ENCODE measurements at regions of chr2 and their contacts with region 1.

Region 1: GRCh38 chr2:74715078-74715791 is 61.2 kb downstream of the SEMA4F start:
- DNase-seq: peak; percentile 87
- H3K4me3 ChIP-seq: peak overlapping the region; percentile 23 to 60 (median 54)
- H3K27ac ChIP-seq: peak overlapping the region; percentile 59 to 72 (median 65)
- H3K4me1 ChIP-seq: peaks cover 0 to 11% (median 8%) of the 10 kb centered on the region in 4 donors
- H3K27me3 ChIP-seq: no peaks in the 10 kb centered on the region
- CTCF ChIP-seq: peak; percentile 63 to 90 (median 84)
- EP300 ChIP-seq: no peak
- POLR2A ChIP-seq: no peak

Region 2: GRCh38 chr2:74725287-74725686 is 10.1 kb after region 1 on chr2:
- intact Hi-C with region 1: no loop called
- DNase-seq: no peak
- H3K4me3 ChIP-seq: no peak overlapping the region
- H3K27ac ChIP-seq: no peak overlapping the region
- H3K4me1 ChIP-seq: no peaks in the 10 kb centered on the region
- H3K27me3 ChIP-seq: peaks cover 0 to 4% (median 0%) of the 10 kb centered on the region in 3 donors
- CTCF ChIP-seq: no peak
- EP300 ChIP-seq: no peak
- POLR2A ChIP-seq: no peak

Region 3: GRCh38 chr2:74764429-74765272 is 49.4 kb after region 1 on chr2:
- intact Hi-C with region 1: no loop called
- DNase-seq: no peak
- H3K4me3 ChIP-seq: no peak overlapping the region
- H3K27ac ChIP-seq: no peak overlapping the region
- H3K4me1 ChIP-seq: peaks cover 0 to 19% (median 6%) of the 10 kb centered on the region in 4 donors
- H3K27me3 ChIP-seq: no peaks in the 10 kb centered on the region
- CTCF ChIP-seq: no peak
- EP300 ChIP-seq: no peak
- POLR2A ChIP-seq: no peak

Region 4: GRCh38 chr2:74876081-74876886 is 161.0 kb after region 1 on chr2:
- intact Hi-C with region 1: loop called (anchors 1 kb)
- DNase-seq: no peak
- H3K4me3 ChIP-seq: no peak overlapping the region
- H3K27ac ChIP-seq: peak overlapping the region in 3 of 4 donors; percentile 7 to 33 (median 32)
- H3K4me1 ChIP-seq: peaks cover 0 to 8% (median 2%) of the 10 kb centered on the region in 4 donors
- H3K27me3 ChIP-seq: no peaks in the 10 kb centered on the region
- CTCF ChIP-seq: peak in 3 of 4 experiments; percentile 47 to 69 (median 57)
- EP300 ChIP-seq: no peak
- POLR2A ChIP-seq: no peak